Caco-2 (cell line): ENCODE measurements at regions of chr15 and their contacts with region 1.

Region 1: GRCh38 chr15:38252481-38253412 is at the start of gene SPRED1:
- DNase-seq: peak; percentile 63 to 70
- H3K4me3 ChIP-seq: peak within 1 kb of the TSS; percentile 71
- H3K4me3 Mint-ChIP-seq: peak within 1 kb of the TSS; percentile 97
- H3K27ac Mint-ChIP-seq: peak within 1 kb of the TSS; percentile 89
- H3K4me1 ChIP-seq: no peaks in the 10 kb centered on the region; the same call in 1 of the 2 replicates
- H3K4me1 Mint-ChIP-seq: peaks cover 27% of the 10 kb centered on the region
- H3K27me3 ChIP-seq: no peaks in the 10 kb centered on the region
- H3K27me3 Mint-ChIP-seq: no peaks in the 10 kb centered on the region
- CTCF ChIP-seq: no peak
- total RNA-seq, gene SPRED1: 10.4 and 12.4 TPM in 2 replicates

Region 2: DNA sequence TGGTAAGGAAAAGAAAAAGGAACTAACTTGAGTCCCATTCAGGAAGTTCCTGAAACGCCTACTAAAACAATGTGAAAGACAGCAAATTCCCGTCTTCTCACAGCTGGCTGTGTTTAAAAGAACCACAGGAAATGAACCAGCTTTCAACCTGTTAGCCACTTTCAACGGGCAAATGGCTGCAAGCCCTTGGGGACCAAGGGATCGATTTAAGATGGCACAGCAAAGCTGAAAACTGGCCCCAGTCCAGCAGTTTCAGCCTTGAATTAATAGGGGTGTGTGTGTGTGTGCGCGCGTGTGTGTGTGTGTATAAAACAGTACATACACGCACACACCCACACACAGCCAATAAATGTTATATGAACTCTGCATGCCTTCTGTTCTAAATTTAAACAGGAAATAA is 487.0 kb before region 1 on chr15:
- CTCF ChIA-PET with region 1: no interaction called
- POLR2A ChIA-PET with region 1: no interaction called
- intact Hi-C with region 1: no loop called
- DNase-seq: no peak
- H3K4me3 ChIP-seq: no peak overlapping the region
- H3K4me3 Mint-ChIP-seq: no peak overlapping the region
- H3K27ac Mint-ChIP-seq: no peak overlapping the region
- H3K4me1 ChIP-seq: no peaks in the 10 kb centered on the region
- H3K4me1 Mint-ChIP-seq: no peaks in the 10 kb centered on the region
- H3K27me3 ChIP-seq: no peaks in the 10 kb centered on the region
- H3K27me3 Mint-ChIP-seq: peaks cover 6% of the 10 kb centered on the region
- CTCF ChIP-seq: no peak

Region 3: DNA sequence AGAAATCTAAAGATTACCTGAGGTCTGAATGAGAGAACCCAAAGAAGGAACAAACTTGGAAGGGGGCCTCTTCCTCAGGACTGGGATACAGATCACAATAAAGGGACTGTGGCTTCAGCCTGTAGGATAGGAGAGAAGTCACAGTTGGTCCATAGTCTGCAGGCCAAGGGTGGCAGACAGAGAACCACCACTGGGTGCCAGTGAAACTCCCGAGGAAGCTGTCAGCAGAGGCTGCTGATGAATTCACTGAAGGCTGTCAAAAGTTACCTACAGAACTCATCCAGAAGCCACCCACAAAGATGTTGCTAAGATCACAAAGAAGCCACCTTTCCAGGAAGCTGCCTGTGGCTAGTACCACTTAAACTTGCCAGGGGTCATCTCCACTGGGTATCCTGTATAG is 239.9 kb before region 1 on chr15:
- CTCF ChIA-PET with region 1: no interaction called
- POLR2A ChIA-PET with region 1: no interaction called
- intact Hi-C with region 1: loop called (anchors 5 kb)
- DNase-seq: no peak
- H3K4me3 ChIP-seq: no peak overlapping the region
- H3K4me3 Mint-ChIP-seq: no peak overlapping the region
- H3K27ac Mint-ChIP-seq: no peak overlapping the region
- H3K4me1 ChIP-seq: no peaks in the 10 kb centered on the region
- H3K4me1 Mint-ChIP-seq: peaks cover 8% of the 10 kb centered on the region
- H3K27me3 ChIP-seq: no peaks in the 10 kb centered on the region
- H3K27me3 Mint-ChIP-seq: no peaks in the 10 kb centered on the region
- CTCF ChIP-seq: no peak

Region 4: DNA sequence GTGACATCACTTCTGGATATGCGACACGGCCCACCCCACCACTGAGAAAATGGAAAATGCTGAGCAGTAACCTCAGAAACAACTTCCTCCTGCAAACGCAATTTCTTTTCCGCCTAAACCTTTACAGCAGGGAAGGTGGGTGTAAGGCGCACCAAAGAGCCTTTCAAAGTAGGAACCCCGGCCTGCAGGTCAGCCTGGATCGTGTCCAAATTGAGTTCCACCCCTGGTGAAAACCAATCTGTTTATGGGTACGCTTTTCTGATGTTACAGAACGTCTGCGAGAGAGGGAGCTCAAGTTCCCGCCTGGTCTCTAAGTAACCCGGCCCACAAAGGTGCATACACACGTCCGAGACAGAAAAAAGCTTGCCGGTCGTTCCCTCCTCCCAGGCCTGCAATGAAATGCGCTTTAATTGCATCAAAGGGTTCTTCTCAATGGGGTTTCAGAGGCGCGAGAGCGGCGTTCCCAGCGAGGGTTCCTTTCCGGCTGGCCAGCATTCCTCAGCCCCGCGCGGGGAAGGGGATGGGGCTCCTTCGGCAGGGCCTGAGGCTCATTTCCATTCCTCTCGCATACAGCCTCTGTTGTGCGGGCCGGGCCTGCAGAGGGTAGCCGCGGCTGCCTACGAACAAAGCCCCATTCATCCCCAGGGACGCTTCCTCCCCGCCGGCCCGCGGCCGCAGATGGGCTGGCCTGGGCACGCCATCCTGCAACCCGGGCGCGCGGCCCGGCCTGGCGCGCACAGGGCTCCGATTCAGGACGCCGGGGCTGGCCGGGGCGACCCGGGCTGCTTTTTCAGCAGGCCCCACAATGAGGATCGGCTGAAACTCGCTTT is 180.2 kb before region 1 on chr15:
- CTCF ChIA-PET with region 1: interaction called, 15 read pairs
- POLR2A ChIA-PET with region 1: interaction called, 3 read pairs
- intact Hi-C with region 1: loop called (anchors 1 kb)
- DNase-seq: peak; percentile 81 to 83
- H3K4me3 ChIP-seq: peak overlapping the region; percentile 51
- H3K4me3 Mint-ChIP-seq: peak overlapping the region; percentile 81
- H3K27ac Mint-ChIP-seq: peak overlapping the region; percentile 93
- H3K4me1 ChIP-seq: peaks cover 33% of the 10 kb centered on the region; the same call in 1 of the 2 replicates
- H3K4me1 Mint-ChIP-seq: peaks cover 15% of the 10 kb centered on the region
- H3K27me3 ChIP-seq: no peaks in the 10 kb centered on the region
- H3K27me3 Mint-ChIP-seq: no peaks in the 10 kb centered on the region
- CTCF ChIP-seq: no peak

Region 5: GRCh38 chr15:38129531-38130204 is 123.1 kb before region 1 on chr15:
- CTCF ChIA-PET with region 1: no interaction called
- POLR2A ChIA-PET with region 1: no interaction called
- intact Hi-C with region 1: loop called (anchors 1 kb)
- DNase-seq: no peak
- H3K4me3 ChIP-seq: no peak overlapping the region
- H3K4me3 Mint-ChIP-seq: no peak overlapping the region
- H3K27ac Mint-ChIP-seq: no peak overlapping the region
- H3K4me1 ChIP-seq: peaks cover 13% of the 10 kb centered on the region
- H3K4me1 Mint-ChIP-seq: peaks cover 14% of the 10 kb centered on the region
- H3K27me3 ChIP-seq: no peaks in the 10 kb centered on the region
- H3K27me3 Mint-ChIP-seq: peaks cover 4% of the 10 kb centered on the region
- CTCF ChIP-seq: no peak

Region 6: DNA sequence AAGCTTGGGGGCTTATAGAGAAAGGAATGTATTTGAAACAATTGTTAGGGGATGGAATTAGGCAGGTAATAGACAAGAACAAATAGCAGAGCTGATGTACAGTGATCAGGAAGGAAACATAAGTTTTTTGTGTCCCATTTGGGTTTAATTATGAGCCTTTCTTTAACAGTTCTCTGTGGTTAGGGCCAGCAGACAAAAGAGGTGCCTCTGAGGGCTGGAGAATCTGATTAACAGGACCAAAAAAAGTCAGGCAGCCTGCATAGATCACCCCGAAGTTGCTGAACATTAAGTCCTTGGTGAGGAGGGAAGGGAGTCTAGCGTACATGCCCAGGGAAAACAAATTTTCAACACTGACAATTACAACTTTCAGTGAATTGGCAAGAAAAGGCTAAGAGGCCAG is 88.7 kb before region 1 on chr15:
- CTCF ChIA-PET with region 1: interaction called, 6 read pairs
- POLR2A ChIA-PET with region 1: no interaction called
- intact Hi-C with region 1: loop called (anchors 2 kb)
- DNase-seq: no peak
- H3K4me3 ChIP-seq: no peak overlapping the region
- H3K4me3 Mint-ChIP-seq: peak overlapping the region; percentile 66
- H3K27ac Mint-ChIP-seq: peak overlapping the region; percentile 78
- H3K4me1 ChIP-seq: peaks cover 41% of the 10 kb centered on the region
- H3K4me1 Mint-ChIP-seq: peaks cover 32% of the 10 kb centered on the region
- H3K27me3 ChIP-seq: no peaks in the 10 kb centered on the region
- H3K27me3 Mint-ChIP-seq: no peaks in the 10 kb centered on the region
- CTCF ChIP-seq: no peak

Region 7: GRCh38 chr15:38217191-38217595 is 35.6 kb before region 1 on chr15:
- CTCF ChIA-PET with region 1: interaction called, 3 read pairs
- POLR2A ChIA-PET with region 1: interaction called, 6 read pairs
- intact Hi-C with region 1: loop called (anchors 5 kb)
- DNase-seq: no peak
- H3K4me3 ChIP-seq: no peak overlapping the region
- H3K4me3 Mint-ChIP-seq: no peak overlapping the region
- H3K27ac Mint-ChIP-seq: peak overlapping the region; percentile 54
- H3K4me1 ChIP-seq: peaks cover 50% of the 10 kb centered on the region
- H3K4me1 Mint-ChIP-seq: peaks cover 24% of the 10 kb centered on the region
- H3K27me3 ChIP-seq: no peaks in the 10 kb centered on the region
- H3K27me3 Mint-ChIP-seq: no peaks in the 10 kb centered on the region
- CTCF ChIP-seq: no peak

Region 8: DNA sequence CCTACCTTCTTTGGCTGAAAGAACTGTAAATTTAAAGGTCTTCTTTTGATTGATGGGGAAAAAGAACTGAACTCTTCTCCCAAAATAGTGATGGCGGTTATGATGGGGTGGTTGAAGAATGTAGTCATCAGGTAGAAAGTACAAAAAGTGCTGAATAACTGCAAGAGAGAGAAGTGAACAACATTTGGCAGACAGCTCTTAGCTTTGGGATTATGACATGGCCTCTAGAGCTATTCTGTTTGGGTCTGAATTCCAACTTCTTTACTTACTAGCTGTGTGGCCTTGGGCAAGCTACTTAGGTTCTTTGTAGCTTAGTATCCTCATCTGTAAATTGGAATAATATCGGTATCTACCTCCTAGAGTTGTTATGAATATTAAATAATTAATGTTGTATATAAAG is 91.6 kb after region 1 on chr15:
- CTCF ChIA-PET with region 1: no interaction called
- POLR2A ChIA-PET with region 1: no interaction called
- intact Hi-C with region 1: no loop called
- DNase-seq: no peak
- H3K4me3 ChIP-seq: no peak overlapping the region
- H3K4me3 Mint-ChIP-seq: no peak overlapping the region
- H3K27ac Mint-ChIP-seq: no peak overlapping the region
- H3K4me1 ChIP-seq: no peaks in the 10 kb centered on the region
- H3K4me1 Mint-ChIP-seq: no peaks in the 10 kb centered on the region
- H3K27me3 ChIP-seq: no peaks in the 10 kb centered on the region
- H3K27me3 Mint-ChIP-seq: no peaks in the 10 kb centered on the region
- CTCF ChIP-seq: no peak

Region 9: DNA sequence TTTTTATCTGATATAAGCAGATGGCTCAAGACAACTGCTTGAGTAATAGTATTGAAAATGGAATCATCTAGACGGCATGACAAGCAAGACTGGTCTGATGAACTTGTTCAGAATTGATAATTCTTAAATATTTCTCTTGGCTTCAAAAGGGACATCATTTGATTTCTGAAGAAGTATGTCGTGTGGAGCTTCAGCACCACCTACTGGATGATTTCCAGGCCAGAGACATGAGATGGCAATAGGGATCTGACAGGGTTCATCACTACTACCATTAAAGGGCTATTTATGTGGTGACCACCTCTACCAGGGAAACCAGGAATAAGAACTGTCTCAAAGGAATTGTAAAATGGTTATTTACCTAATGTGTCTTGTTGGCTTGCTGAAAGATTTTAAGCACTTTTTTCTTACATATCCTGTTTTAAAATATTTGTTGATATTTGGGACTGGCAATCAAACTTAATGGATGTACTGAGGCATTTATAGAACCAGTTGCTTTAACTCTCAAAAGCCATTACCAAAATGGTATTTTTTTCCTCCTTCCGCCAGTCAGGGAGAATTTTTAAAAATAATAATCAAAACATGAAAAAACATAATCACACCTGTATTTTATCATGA is 101.7 kb after region 1 on chr15:
- CTCF ChIA-PET with region 1: interaction called, 3 read pairs
- POLR2A ChIA-PET with region 1: no interaction called
- intact Hi-C with region 1: loop called (anchors 2 kb)
- DNase-seq: peak; percentile 58 to 70
- H3K4me3 ChIP-seq: no peak overlapping the region
- H3K4me3 Mint-ChIP-seq: no peak overlapping the region
- H3K27ac Mint-ChIP-seq: no peak overlapping the region
- H3K4me1 ChIP-seq: no peaks in the 10 kb centered on the region
- H3K4me1 Mint-ChIP-seq: no peaks in the 10 kb centered on the region
- H3K27me3 ChIP-seq: no peaks in the 10 kb centered on the region
- H3K27me3 Mint-ChIP-seq: no peaks in the 10 kb centered on the region
- CTCF ChIP-seq: peak; percentile 69 to 70